Prostate gland (tissue), 2 donors: ENCODE measurements at regions of chr3 and their contacts with region 1.

Region 1: DNA sequence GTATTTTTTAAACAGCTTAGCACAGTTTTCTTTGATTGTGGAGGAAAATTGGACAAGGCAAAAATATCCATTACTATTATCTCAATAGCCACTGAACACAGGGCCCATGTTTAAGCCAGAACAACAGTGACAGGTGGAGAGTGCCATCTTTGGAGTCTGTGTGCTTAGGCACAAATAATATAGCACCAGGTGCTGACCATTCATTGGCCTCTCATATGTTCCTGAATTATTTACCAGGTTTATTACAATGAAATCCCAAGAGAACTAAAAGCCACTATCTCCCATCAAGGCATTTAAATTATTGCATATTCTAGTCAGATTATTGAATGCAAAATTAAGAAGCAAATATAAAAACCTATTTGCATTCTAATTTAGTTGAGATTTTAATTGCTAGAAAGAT is 39.6 kb downstream of the GPR156 start:
- DNase-seq: no peak
- H3K4me3 ChIP-seq: no peak overlapping the region
- H3K27ac ChIP-seq: no peak overlapping the region
- H3K4me1 ChIP-seq: no peaks in the 10 kb centered on the region
- H3K27me3 ChIP-seq: no peaks in the 10 kb centered on the region
- CTCF ChIP-seq: no peak
- POLR2A ChIP-seq: no peak

Region 2: GRCh38 chr3:120795017-120795648 is 549.7 kb after region 1 on chr3:
- intact Hi-C with region 1: loop called (anchors 10 kb)
- DNase-seq: peak; percentile 67
- H3K4me3 ChIP-seq: no peak overlapping the region
- H3K27ac ChIP-seq: no peak overlapping the region
- H3K4me1 ChIP-seq: no peaks in the 10 kb centered on the region
- H3K27me3 ChIP-seq: no peaks in the 10 kb centered on the region
- CTCF ChIP-seq: peak; percentile 43 to 75 (median 72)
- POLR2A ChIP-seq: no peak